ENCODE measurements at regions of chr1 and their contacts with region 1.

Region 1: GRCh38 chr1:24744911-24745710 is at the start of gene CLIC4:
- DNase-seq: peak; percentile 98
- ATAC-seq: peak; percentile 88 to 89
- H3K4me3 ChIP-seq: peak within 1 kb of the TSS; percentile 63 to 90 (median 68)
- H3K27ac ChIP-seq: peak within 1 kb of the TSS; percentile 78 to 89 (median 82)
- H3K4me1 ChIP-seq: no peaks in the 10 kb centered on the region
- H3K27me3 ChIP-seq: peaks cover 0 to 3% (median 0%) of the 10 kb centered on the region in 3 donors
- CTCF ChIP-seq: peak in 3 of 5 experiments; percentile 26 to 49 (median 46)
- POLR2A ChIP-seq: peak; percentile 92 to 97
- total RNA-seq, gene CLIC4: 37.3 to 74.5 (median 45.6) TPM

Region 2: DNA sequence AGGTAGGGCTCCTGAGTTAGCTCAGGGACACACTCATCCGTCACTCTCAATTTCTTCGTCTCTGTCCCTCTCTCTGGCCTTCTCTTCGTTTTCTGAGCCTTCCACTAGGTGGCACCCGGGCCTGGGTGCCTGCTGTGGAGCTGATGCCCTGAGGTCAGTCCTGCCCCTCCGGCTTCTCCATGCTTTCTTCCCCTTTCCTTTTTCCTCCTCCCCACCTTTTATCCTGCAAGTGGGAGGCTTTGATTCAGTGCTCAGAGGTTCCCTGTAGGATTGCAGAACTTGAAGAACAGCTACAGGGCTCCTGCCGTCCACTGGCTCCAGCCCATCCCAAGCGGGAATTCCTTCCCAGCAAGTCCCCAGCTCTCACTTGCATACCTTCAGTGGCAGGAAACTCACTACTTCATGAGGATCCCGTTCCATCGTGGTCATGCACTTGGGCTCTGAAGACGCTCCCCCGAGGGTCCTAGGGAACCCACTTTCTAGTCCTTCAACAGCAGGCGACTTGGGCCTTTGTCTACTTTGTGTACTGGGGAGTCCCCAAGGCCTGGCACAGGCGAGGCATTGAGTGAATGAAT is 56.4 kb before region 1 on chr1:
- in situ Hi-C with region 1: no loop called
- intact Hi-C with region 1: loop called (anchors 2 kb)
- DNase-seq: peak; percentile 32 to 48
- ATAC-seq: peak; percentile 63 to 78
- H3K4me3 ChIP-seq: no peak overlapping the region
- H3K27ac ChIP-seq: no peak overlapping the region
- H3K4me1 ChIP-seq: no peaks in the 10 kb centered on the region
- H3K27me3 ChIP-seq: no peaks in the 10 kb centered on the region
- CTCF ChIP-seq: peak; percentile 67 to 86 (median 82)
- POLR2A ChIP-seq: no peak

Region 3: DNA sequence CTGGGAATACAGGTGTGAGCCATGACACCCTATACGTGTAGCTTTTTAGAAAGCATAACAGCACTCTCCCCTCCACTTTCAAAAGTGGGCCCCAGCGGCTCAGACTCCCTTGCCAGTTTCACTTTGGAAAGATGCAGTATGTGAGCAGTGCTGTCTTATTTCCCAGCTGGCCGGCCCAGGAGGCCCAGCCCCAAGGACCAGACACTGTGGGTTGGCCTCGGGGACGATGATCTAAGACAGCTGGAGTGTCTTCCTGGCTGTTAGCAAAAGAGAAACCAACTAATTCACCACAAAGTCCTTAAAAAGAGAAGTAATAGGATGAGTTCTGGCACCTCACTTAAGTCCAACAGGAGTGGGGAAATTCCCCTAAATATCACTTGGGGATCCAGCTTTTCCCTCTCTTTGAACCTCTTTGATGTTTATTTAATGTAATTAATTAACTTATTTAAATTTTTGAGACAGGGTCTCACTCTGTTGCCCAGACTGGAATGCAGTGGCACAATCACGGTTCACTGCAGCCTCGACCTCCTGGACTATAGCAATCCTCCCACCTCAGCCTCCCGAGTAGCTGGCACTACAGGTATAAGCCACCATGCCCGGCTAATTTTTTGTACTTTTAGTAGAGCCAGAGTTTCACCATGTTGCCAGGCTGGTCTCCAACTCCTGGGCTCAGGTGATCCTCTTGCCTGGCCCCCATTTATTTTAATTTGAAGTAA is 17.5 kb before region 1 on chr1:
- in situ Hi-C with region 1: no loop called
- intact Hi-C with region 1: no loop called
- DNase-seq: peak in 1 of 2 donors; percentile 32
- ATAC-seq: peak; percentile 16 to 49
- H3K4me3 ChIP-seq: no peak overlapping the region
- H3K27ac ChIP-seq: peak overlapping the region; percentile 9 to 64 (median 40)
- H3K4me1 ChIP-seq: peaks cover 13 to 15% of the 10 kb centered on the region in 2 donors
- H3K27me3 ChIP-seq: no peaks in the 10 kb centered on the region
- CTCF ChIP-seq: no peak
- POLR2A ChIP-seq: no peak

Region 4: DNA sequence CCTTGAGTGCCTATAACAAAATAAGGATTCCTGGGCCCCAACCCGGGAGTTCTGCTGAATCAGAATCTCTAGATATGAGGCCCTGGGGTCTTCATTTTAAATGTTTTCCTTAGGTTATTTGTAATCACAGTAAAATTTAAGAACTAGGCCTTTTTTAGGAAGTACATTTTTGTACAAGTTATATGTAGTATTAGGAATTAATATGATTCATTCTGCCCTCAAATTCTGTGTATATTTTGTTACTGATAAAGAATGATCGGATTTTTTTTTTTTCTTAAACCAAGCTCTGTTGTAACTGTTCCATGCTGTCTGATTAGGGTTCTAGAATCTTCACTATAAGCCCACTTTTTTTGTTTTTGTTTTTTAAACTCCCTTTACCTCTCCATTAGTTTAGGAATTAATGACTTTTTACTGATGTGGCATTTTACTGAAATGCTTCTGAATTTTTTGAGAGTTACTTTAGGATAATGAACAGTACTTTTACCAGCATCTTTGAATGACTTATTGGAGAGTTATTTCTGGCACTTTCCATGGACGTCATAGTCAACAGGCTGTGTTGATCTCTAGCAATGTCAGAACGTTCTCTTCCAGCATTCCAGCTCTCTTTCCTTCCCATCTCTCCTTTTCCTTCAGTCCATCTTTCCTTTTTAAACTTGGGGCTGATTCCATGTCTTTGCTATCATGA is 48.5 kb after region 1 on chr1:
- in situ Hi-C with region 1: no loop called
- intact Hi-C with region 1: loop called (anchors 5 kb)
- DNase-seq: no peak
- ATAC-seq: peak; percentile 44 to 70
- H3K4me3 ChIP-seq: no peak overlapping the region
- H3K27ac ChIP-seq: peak overlapping the region; percentile 46 to 66 (median 50)
- H3K4me1 ChIP-seq: peaks cover 18 to 22% of the 10 kb centered on the region in 2 donors
- H3K27me3 ChIP-seq: no peaks in the 10 kb centered on the region
- CTCF ChIP-seq: no peak
- POLR2A ChIP-seq: no peak

Measured in gastrocnemius medialis (tissue), 4 donors.